MCF 10A (cell line): ENCODE measurements at regions of chr1 and their contacts with region 1.

Region 1: DNA sequence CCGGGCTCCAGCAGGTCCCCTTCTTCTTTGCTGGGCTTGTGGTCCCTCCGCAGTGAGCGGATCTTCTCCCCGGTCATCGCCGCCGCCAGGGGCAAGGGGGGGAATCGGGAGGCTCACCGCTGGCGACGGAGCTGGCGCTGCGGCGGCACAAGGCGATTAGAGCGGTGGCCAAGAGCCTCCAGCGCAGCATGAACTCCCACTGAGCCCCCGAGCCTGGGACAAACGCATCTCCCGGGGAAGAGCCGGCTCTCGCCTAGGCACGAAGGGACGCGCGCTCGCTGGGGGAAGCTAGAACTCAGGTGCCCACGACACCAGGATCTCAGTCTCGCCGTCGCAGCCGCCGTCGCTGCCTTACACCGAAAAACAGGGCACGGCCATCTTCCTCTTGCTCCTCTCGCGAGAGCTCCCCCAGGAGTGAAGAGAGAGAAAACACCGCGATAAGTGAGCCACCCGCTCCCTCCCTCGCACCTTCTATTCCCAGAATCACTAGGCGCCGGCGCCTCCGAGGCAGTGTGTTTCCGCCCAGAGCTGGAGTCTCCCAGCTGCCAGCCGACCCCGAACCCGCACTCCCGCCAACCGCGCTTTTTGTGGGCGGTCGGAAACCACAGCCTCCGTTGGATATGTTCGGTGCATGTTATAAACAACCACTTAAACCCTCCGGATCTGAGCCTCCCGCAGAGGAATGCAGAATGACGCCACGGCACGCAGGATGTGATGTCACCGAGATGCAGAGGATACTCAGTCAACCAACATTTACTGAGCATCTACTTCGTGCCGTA is at the start of gene ANKRD13C:
- DNase-seq: peak; percentile 97
- H3K4me3 Mint-ChIP-seq: peak within 1 kb of the TSS; percentile 98
- H3K27ac Mint-ChIP-seq: peak within 1 kb of the TSS; percentile 99
- H3K4me1 Mint-ChIP-seq: peaks cover 14% of the 10 kb centered on the region
- H3K27me3 Mint-ChIP-seq: no peaks in the 10 kb centered on the region
- CTCF ChIP-seq: no peak
- total RNA-seq, gene ANKRD13C: 17.8 and 18.9 TPM in 2 replicates

Region 2: GRCh38 chr1:70221241-70222121 is 133.0 kb before region 1 on chr1 and contains the start of gene SRSF11:
- CTCF ChIA-PET with region 1: interaction called, 3 read pairs
- POLR2A ChIA-PET with region 1: interaction called, 26 read pairs
- intact Hi-C with region 1: no loop called
- DNase-seq: peak; percentile 93
- H3K4me3 Mint-ChIP-seq: peak within 1 kb of the TSS; percentile 78
- H3K27ac Mint-ChIP-seq: peak within 1 kb of the TSS; percentile 96
- H3K4me1 Mint-ChIP-seq: peaks cover 21% of the 10 kb centered on the region
- H3K27me3 Mint-ChIP-seq: no peaks in the 10 kb centered on the region
- CTCF ChIP-seq: no peak
- total RNA-seq, gene SRSF11: 209 and 218 TPM in 2 replicates

Region 3: DNA sequence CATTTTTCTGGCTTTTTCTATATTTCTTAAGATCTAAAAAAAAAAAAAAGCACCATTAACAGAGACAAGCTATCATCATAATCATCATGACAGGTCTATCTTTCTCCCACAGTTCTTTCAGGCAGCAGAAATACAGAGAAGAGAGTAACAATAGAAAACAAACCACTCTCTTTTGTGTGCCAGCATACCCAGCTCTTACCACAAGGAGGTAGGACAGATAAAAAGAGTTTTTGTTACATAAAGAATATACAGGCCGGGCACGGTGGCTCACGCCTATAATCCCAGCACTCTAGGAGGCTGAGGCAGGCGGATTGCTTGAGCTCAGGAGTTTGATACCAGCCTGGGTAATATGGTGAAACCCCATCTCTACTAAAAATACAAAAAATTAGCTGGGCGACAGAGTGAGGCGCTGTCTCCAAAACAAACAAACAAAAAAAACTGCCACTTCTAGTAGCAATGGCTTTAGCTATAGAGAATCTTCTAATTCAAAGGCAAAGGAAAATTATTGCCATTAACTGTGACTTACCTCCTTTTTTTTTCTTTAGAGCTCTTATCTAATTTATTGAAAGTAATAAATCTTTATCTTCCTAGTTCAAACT is 39.7 kb before region 1 on chr1:
- CTCF ChIA-PET with region 1: interaction called, 3 read pairs
- POLR2A ChIA-PET with region 1: interaction called, 13 read pairs
- intact Hi-C with region 1: no loop called
- DNase-seq: no peak
- H3K4me3 Mint-ChIP-seq: no peak overlapping the region
- H3K27ac Mint-ChIP-seq: no peak overlapping the region
- H3K4me1 Mint-ChIP-seq: peaks cover 10% of the 10 kb centered on the region
- H3K27me3 Mint-ChIP-seq: no peaks in the 10 kb centered on the region
- CTCF ChIP-seq: no peak

Region 4: GRCh38 chr1:70509996-70510876 is 155.7 kb after region 1 on chr1:
- CTCF ChIA-PET with region 1: no interaction called
- POLR2A ChIA-PET with region 1: interaction called, 4 read pairs
- intact Hi-C with region 1: loop called (anchors 1 kb)
- DNase-seq: peak; percentile 88
- H3K4me3 Mint-ChIP-seq: no peak overlapping the region
- H3K27ac Mint-ChIP-seq: no peak overlapping the region
- H3K4me1 Mint-ChIP-seq: no peaks in the 10 kb centered on the region
- H3K27me3 Mint-ChIP-seq: peaks cover 17% of the 10 kb centered on the region
- CTCF ChIP-seq: peak; percentile 61